Mammary epithelial cell (primary cell): ENCODE measurements at regions of chr2 and their contacts with region 1.

Region 1: DNA sequence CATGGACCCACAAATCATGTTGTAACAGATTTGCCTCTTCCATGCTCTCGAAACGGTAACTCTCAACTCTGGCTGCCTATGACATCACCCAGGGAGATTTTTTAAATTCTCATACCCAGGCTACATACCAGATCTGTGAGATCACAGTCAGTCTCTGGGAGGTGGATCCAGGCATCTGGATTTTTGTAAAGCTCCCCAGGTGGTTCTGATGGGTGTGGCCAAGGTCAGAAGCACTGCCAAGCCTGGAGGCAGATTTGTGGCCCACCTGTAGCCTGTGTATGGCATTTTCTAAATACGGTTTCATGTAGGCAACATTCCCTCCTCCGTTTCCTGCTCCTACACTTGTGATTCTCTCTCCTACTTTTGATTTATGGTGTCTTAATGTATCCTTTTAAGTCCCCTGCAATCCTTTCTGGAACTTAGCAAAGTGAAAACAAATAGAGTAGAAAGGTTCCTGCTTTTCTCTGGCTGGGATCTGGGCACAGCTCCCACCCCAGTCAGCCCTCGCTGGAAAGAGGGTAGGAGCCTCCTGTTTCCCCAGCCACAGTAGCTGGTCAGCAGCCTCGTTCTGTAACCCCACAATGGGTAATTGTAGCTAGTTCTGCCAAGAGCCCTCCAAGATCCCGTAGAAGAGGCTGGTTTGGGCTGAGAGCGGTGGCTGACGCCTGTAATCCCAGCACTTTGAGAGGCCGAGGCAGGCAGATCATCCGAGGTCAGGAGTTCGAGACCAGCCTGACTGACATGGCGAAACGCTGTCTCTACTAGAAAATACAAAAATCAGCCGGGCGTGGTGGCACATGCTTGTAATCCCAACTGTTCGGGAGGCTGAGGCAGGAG is 96.2 kb downstream of the KLHL29 start:
- DNase-seq: peak; percentile 93
- H3K4me3 ChIP-seq: no peak overlapping the region
- H3K27ac ChIP-seq: no peak overlapping the region
- H3K4me1 ChIP-seq: peaks cover 14% of the 10 kb centered on the region
- H3K27me3 ChIP-seq: no peaks in the 10 kb centered on the region
- CTCF ChIP-seq: no peak

Region 2: DNA sequence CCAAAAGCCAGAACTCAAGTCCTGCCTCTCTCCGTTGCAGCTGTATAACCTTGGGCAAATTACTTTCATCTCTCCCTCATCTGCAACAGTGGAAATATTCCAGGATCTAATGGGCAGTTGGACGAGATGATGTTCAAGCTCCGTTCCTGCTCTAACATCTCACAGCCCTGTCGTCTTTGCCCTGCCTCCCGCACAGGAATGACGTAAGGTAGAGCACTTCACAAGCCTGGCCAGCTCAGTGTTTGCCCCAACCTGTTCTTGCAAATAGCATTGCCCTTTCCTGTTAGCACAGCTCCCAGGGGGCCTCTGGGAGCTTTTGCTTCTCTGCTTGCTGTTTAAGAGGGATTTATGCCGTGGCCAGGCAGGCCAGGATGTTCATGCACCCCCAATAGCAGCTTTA is 11.7 kb after region 1 on chr2:
- CTCF ChIA-PET with region 1: no interaction called
- dilution Hi-C with region 1: no loop called
- in situ Hi-C with region 1: no loop called
- intact Hi-C with region 1: loop called (anchors 1 kb)
- DNase-seq: peak; percentile 76
- H3K4me3 ChIP-seq: no peak overlapping the region
- H3K27ac ChIP-seq: no peak overlapping the region
- H3K4me1 ChIP-seq: peaks cover 35% of the 10 kb centered on the region
- H3K27me3 ChIP-seq: no peaks in the 10 kb centered on the region
- CTCF ChIP-seq: no peak